Naive thymus-derived CD4-positive, alpha-beta T cell (primary cell): ENCODE measurements at regions of chr6 and their contacts with region 1.

Region 1: DNA sequence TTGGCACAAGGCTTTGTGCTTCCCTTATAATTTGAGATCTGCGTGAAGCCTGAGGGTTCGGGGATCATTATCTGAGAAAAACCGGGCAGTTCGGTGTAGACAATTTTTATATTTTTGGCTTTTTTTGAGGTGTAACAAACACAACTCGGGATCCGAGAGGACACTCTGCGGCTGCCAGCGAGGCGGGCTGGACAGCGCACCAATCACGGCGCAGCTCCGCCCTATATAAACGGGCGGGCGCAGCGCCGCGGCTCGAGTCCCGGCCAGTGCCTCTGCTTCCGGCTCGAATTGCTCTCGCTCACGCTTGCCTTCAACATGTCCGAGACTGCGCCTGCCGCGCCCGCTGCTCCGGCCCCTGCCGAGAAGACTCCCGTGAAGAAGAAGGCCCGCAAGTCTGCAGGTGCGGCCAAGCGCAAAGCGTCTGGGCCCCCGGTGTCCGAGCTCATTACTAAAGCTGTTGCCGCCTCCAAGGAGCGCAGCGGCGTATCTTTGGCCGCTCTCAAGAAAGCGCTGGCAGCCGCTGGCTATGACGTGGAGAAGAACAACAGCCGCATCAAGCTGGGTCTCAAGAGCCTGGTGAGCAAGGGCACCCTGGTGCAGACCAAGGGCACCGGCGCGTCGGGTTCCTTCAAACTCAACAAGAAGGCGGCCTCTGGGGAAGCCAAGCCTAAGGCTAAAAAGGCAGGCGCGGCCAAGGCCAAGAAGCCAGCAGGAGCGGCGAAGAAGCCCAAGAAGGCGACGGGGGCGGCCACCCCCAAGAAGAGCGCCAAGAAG is 69.0 kb downstream of the HFE start:
- DNase-seq: peak; percentile 80 to 92 (median 88)
- ATAC-seq: peak; percentile 61
- H3K4me3 ChIP-seq: peak overlapping the region; percentile 82
- H3K4me3 Mint-ChIP-seq: peak overlapping the region; percentile 96 to 100 (median 98)
- H3K27ac ChIP-seq: peak overlapping the region; percentile 92
- H3K27ac Mint-ChIP-seq: peak overlapping the region; percentile 95 to 99 (median 98)
- H3K4me1 ChIP-seq: peaks cover 19 to 23% of the 10 kb centered on the region in 2 donors
- H3K4me1 Mint-ChIP-seq: peaks cover 16 to 58% (median 30%) of the 10 kb centered on the region in 7 donors
- H3K27me3 ChIP-seq: no peaks in the 10 kb centered on the region
- H3K27me3 Mint-ChIP-seq: peaks cover 0 to 33% (median 0%) of the 10 kb centered on the region in 5 donors

Region 2: GRCh38 chr6:24933868-24934401 is 1222.3 kb before region 1 on chr6:
- CTCF ChIA-PET with region 1: no interaction called
- POLR2A ChIA-PET with region 1: interaction called, 11 read pairs
- intact Hi-C with region 1: no loop called
- DNase-seq: peak in 7 of 9 donors; percentile 59 to 78 (median 72)
- ATAC-seq: peak; percentile 52
- H3K4me3 ChIP-seq: peak overlapping the region; percentile 89
- H3K4me3 Mint-ChIP-seq: peak overlapping the region; percentile 89 to 100 (median 98)
- H3K27ac ChIP-seq: peak overlapping the region; percentile 85
- H3K27ac Mint-ChIP-seq: peak overlapping the region; percentile 88 to 99 (median 93)
- H3K4me1 ChIP-seq: peaks cover 37 to 44% of the 10 kb centered on the region in 2 donors
- H3K4me1 Mint-ChIP-seq: peaks cover 44 to 65% (median 50%) of the 10 kb centered on the region in 7 donors
- H3K27me3 ChIP-seq: no peaks in the 10 kb centered on the region
- H3K27me3 Mint-ChIP-seq: no peaks in the 10 kb centered on the region

Region 3: GRCh38 chr6:25692472-25692871 is 463.8 kb before region 1 on chr6:
- CTCF ChIA-PET with region 1: no interaction called
- POLR2A ChIA-PET with region 1: no interaction called
- intact Hi-C with region 1: no loop called
- DNase-seq: no peak
- ATAC-seq: no peak
- H3K4me3 ChIP-seq: no peak overlapping the region
- H3K4me3 Mint-ChIP-seq: no peak overlapping the region
- H3K27ac ChIP-seq: no peak overlapping the region
- H3K27ac Mint-ChIP-seq: no peak overlapping the region
- H3K4me1 ChIP-seq: no peaks in the 10 kb centered on the region
- H3K4me1 Mint-ChIP-seq: no peaks in the 10 kb centered on the region
- H3K27me3 ChIP-seq: no peaks in the 10 kb centered on the region
- H3K27me3 Mint-ChIP-seq: peaks cover 21 to 40% (median 34%) of the 10 kb centered on the region in 5 donors

Region 4: GRCh38 chr6:26087284-26088115 is 68.8 kb before region 1 on chr6 and contains the start of gene HFE:
- CTCF ChIA-PET with region 1: no interaction called
- POLR2A ChIA-PET with region 1: interaction called, 78 read pairs
- intact Hi-C with region 1: no loop called
- DNase-seq: peak in 8 of 9 donors; percentile 32 to 46 (median 38)
- ATAC-seq: peak; percentile 41
- H3K4me3 ChIP-seq: peak within 1 kb of the TSS; percentile 88
- H3K4me3 Mint-ChIP-seq: peak within 1 kb of the TSS; percentile 84 to 91 (median 88)
- H3K27ac ChIP-seq: peak within 1 kb of the TSS; percentile 72
- H3K27ac Mint-ChIP-seq: peak within 1 kb of the TSS; percentile 73 to 91 (median 84)
- H3K4me1 ChIP-seq: peaks cover 18 to 23% of the 10 kb centered on the region in 2 donors
- H3K4me1 Mint-ChIP-seq: peaks cover 31 to 51% (median 39%) of the 10 kb centered on the region in 7 donors
- H3K27me3 ChIP-seq: no peaks in the 10 kb centered on the region
- H3K27me3 Mint-ChIP-seq: peaks cover 0 to 5% (median 5%) of the 10 kb centered on the region in 5 donors
- total RNA-seq, gene HFE: 1.5 to 4.6 (median 2.5) TPM

Region 5: GRCh38 chr6:26136321-26136720 is 19.9 kb before region 1 on chr6:
- CTCF ChIA-PET with region 1: no interaction called
- POLR2A ChIA-PET with region 1: interaction called, 2,532 read pairs
- intact Hi-C with region 1: no loop called
- DNase-seq: no peak
- ATAC-seq: no peak
- H3K4me3 ChIP-seq: no peak overlapping the region
- H3K4me3 Mint-ChIP-seq: peak overlapping the region in 1 of 10 donors; percentile 45
- H3K27ac ChIP-seq: no peak overlapping the region
- H3K27ac Mint-ChIP-seq: peak overlapping the region in 5 of 9 donors; percentile 1 to 86 (median 53)
- H3K4me1 ChIP-seq: no peaks in the 10 kb centered on the region
- H3K4me1 Mint-ChIP-seq: peaks cover 11 to 65% (median 43%) of the 10 kb centered on the region in 7 donors
- H3K27me3 ChIP-seq: no peaks in the 10 kb centered on the region
- H3K27me3 Mint-ChIP-seq: no peaks in the 10 kb centered on the region

Region 6: GRCh38 chr6:26216356-26216885 is 60.2 kb after region 1 on chr6:
- CTCF ChIA-PET with region 1: interaction called, 6 read pairs
- POLR2A ChIA-PET with region 1: interaction called, 2,611 read pairs
- intact Hi-C with region 1: loop called (anchors 1 kb)
- DNase-seq: peak; percentile 56 to 97 (median 93)
- ATAC-seq: peak; percentile 86
- H3K4me3 ChIP-seq: peak overlapping the region; percentile 72
- H3K4me3 Mint-ChIP-seq: no peak overlapping the region
- H3K27ac ChIP-seq: peak overlapping the region; percentile 84
- H3K27ac Mint-ChIP-seq: no peak overlapping the region
- H3K4me1 ChIP-seq: peaks cover 12 to 18% of the 10 kb centered on the region in 2 donors
- H3K4me1 Mint-ChIP-seq: peaks cover 3 to 31% (median 10%) of the 10 kb centered on the region in 7 donors
- H3K27me3 ChIP-seq: no peaks in the 10 kb centered on the region
- H3K27me3 Mint-ChIP-seq: no peaks in the 10 kb centered on the region

Region 7: DNA sequence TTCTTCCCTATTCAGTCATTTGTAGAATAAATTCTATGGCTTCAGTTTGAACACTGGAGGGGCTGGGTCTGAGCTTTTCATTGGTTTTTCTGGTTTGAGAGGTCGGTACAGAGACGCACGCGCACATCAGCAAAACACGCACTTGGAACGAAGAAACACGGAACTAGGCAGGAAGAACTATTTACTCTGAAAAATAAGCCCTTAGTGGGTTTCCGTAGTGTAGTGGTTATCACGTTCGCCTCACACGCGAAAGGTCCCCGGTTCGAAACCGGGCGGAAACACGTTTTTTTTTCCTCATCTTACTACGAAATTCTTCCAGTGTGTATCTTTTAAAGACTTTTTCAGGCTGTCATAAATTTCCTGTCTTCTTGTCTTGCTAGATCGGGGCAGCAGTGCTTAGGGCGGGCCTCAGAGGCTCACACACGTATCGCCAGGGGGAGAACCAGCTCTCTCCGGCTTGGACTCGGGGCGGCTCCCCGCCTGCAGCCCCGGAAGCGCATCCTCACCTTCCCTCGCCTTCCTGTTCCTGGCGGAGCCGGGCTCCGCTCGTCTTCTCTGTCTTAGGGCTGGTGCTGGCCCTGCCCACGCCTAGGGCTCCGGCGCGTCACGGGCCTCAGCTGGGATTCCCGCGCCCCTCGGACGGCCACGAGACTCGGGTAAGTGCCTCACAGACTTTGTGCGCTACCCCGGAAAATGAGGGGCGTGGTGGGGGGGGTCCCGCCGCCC is 381.7 kb after region 1 on chr6 and contains the start of gene HMGN4:
- CTCF ChIA-PET with region 1: no interaction called
- POLR2A ChIA-PET with region 1: interaction called, 12 read pairs
- intact Hi-C with region 1: no loop called
- DNase-seq: peak; percentile 64 to 97 (median 95)
- ATAC-seq: peak; percentile 79
- H3K4me3 ChIP-seq: peak within 1 kb of the TSS; percentile 76
- H3K4me3 Mint-ChIP-seq: peak within 1 kb of the TSS; percentile 88 to 99 (median 94)
- H3K27ac ChIP-seq: peak within 1 kb of the TSS; percentile 88
- H3K27ac Mint-ChIP-seq: peak within 1 kb of the TSS; percentile 91 to 99 (median 98)
- H3K4me1 ChIP-seq: peaks cover 20 to 23% of the 10 kb centered on the region in 2 donors
- H3K4me1 Mint-ChIP-seq: peaks cover 46 to 72% (median 60%) of the 10 kb centered on the region in 7 donors
- H3K27me3 ChIP-seq: no peaks in the 10 kb centered on the region
- H3K27me3 Mint-ChIP-seq: peaks cover 0 to 5% (median 0%) of the 10 kb centered on the region in 5 donors
- total RNA-seq, gene HMGN4: 37.6 to 96.0 (median 81.7) TPM

Region 8: DNA sequence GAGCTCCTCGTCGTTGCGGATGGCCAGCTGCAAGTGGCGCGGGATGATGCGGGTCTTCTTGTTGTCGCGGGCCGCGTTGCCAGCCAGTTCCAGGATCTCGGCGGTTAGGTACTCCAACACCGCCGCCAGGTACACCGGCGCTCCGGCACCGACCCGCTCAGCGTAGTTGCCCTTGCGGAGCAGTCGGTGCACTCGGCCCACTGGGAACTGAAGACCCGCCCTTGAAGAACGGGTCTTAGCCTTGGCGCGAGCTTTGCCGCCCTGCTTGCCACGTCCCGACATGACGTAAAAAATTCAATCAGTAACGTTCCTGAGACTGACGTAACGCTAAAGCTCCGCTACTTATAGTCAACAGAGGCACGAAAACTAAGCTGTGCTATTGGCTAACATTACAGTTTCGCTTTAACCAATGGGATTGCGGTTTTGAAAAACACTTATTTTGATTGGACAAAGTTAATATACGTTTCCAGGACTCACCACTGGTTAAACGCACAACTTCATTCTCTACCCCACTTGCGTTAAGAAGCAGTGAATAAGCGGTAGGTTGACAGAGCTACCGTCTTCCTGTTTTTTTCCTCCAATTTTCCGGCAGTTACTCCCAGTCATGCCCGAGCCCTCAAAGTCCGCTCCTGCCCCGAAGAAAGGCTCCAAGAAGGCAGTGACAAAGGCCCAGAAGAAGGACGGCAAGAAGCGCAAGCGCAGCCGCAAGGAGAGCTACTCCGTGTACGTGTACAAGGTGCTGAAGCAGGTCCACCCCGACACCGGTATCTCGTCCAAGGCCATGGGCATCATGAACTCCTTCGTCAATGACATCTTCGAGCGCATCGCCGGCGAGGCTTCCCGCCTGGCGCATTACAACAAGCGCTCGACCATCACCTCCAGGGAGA is 1682.0 kb after region 1 on chr6:
- CTCF ChIA-PET with region 1: interaction called, 4 read pairs
- POLR2A ChIA-PET with region 1: interaction called, 119 read pairs
- intact Hi-C with region 1: loop called in 1 of 2 experiments (anchors 1 kb)
- DNase-seq: peak; percentile 65 to 96 (median 93)
- ATAC-seq: peak; percentile 86
- H3K4me3 ChIP-seq: peak overlapping the region; percentile 87
- H3K4me3 Mint-ChIP-seq: no peak overlapping the region
- H3K27ac ChIP-seq: peak overlapping the region; percentile 93
- H3K27ac Mint-ChIP-seq: no peak overlapping the region
- H3K4me1 ChIP-seq: peaks cover 22 to 34% of the 10 kb centered on the region in 2 donors
- H3K4me1 Mint-ChIP-seq: peaks cover 7 to 39% (median 29%) of the 10 kb centered on the region in 7 donors
- H3K27me3 ChIP-seq: no peaks in the 10 kb centered on the region
- H3K27me3 Mint-ChIP-seq: peaks cover 0 to 14% (median 7%) of the 10 kb centered on the region in 5 donors